CD4-positive, alpha-beta memory T cell (primary cell): ENCODE measurements at regions of chr22 and their contacts with region 1.

Region 1: DNA sequence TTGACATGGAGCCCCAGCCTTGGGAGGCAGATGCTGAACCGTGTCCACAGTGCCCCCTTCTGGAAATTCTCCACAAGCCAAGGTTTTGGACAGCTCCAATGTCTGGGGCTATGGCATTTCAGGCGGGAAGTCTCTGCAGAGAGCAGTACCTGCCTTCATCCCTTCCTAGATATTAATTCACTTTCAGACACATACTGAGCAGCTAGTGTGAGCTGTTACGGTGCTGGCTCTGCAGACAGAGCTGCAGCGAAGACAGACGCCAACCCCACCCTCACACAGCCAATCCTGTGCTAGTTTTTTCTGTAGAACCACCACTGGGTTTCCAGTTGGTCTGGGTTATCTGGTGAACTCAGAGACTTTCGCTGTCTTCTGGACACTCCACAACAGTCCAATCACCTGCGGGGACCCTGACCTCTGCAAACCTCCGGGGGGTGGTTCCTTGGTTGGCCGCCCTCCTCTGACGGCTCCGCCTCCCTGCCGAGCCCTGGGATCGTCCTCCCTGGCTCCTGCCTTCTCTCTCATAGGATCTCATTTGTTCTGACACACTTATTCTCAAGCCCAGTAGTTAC is 9.1 kb downstream of the LMF2 start:
- DNase-seq: peak; percentile 66 to 69 (median 68)
- H3K4me3 ChIP-seq: no peak overlapping the region
- H3K4me3 Mint-ChIP-seq: no peak overlapping the region
- H3K27ac ChIP-seq: no peak overlapping the region
- H3K27ac Mint-ChIP-seq: peak overlapping the region in 1 of 7 donors; percentile 30
- H3K4me1 ChIP-seq: peaks cover 3% of the 10 kb centered on the region
- H3K4me1 Mint-ChIP-seq: peaks cover 0 to 5% (median under 1%) of the 10 kb centered on the region in 4 donors
- H3K27me3 ChIP-seq: no peaks in the 10 kb centered on the region
- H3K27me3 Mint-ChIP-seq: no peaks in the 10 kb centered on the region

Region 2: GRCh38 chr22:50148991-50149721 is 349.2 kb before region 1 on chr22:
- CTCF ChIA-PET with region 1: no interaction called
- POLR2A ChIA-PET with region 1: no interaction called
- intact Hi-C with region 1: loop called (anchors 1 kb)
- DNase-seq: peak; percentile 69 to 76 (median 75)
- H3K4me3 ChIP-seq: no peak overlapping the region
- H3K4me3 Mint-ChIP-seq: no peak overlapping the region
- H3K27ac ChIP-seq: no peak overlapping the region
- H3K27ac Mint-ChIP-seq: peak overlapping the region in 1 of 7 donors; percentile 7
- H3K4me1 ChIP-seq: no peaks in the 10 kb centered on the region
- H3K4me1 Mint-ChIP-seq: peaks cover 0 to 4% (median under 1%) of the 10 kb centered on the region in 4 donors
- H3K27me3 ChIP-seq: no peaks in the 10 kb centered on the region
- H3K27me3 Mint-ChIP-seq: peaks cover 2 to 3% of the 10 kb centered on the region in 2 donors

Region 3: DNA sequence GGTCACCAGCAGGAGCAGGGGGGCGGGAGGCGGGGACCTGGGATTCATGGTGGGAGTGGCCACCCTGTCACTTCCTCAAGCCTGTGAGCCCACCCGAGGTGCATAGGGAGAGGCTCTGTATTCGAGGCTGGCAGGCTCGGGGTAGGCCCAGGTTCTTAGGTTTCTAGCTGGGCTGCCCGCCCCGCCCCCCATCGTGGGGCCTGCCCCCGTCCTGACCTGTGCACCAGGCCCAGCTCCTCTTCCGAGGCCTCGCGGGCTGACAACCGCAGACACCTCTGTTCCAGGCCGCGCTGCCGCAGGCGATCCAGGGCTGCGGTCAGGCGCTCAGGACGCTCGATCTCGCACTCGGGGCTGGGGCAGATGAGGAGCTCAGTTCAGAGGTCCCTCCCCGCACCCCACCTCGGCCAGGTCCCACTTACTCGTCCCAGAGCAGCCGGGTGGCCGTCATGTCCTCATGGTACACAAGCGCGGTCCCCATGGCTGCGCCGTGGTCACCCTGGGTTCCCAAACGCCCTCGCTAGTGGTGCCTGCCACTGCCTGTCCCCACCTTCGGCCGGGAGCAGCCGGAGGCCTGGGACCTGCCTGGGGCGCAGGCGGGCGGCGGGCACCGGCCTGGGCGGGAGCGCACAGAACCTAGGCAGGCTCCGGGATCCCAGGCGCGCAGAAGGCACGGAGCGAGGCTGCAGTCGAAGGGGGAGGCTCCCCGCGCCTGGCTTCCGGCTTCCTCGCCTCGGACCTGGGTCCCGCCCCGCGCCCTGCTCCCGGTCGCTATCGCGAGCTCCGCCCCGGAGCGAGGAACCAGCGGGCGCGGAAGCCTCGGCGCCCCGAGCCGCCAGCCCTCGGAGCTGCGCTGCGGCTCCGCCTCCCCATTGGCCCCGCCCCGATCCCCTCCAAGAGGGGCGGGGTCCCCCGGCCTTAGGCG is 247.6 kb before region 1 on chr22 and contains the start of gene HDAC10:
- CTCF ChIA-PET with region 1: interaction called, 25 read pairs
- POLR2A ChIA-PET with region 1: interaction called, 7 read pairs
- intact Hi-C with region 1: loop called (anchors 1 kb)
- DNase-seq: peak; percentile 71 to 78 (median 74)
- H3K4me3 ChIP-seq: peak within 1 kb of the TSS; percentile 36 to 89
- H3K4me3 Mint-ChIP-seq: peak within 1 kb of the TSS; percentile 73 to 84 (median 78)
- H3K27ac ChIP-seq: peak within 1 kb of the TSS; percentile 66
- H3K27ac Mint-ChIP-seq: peak within 1 kb of the TSS in 6 of 7 donors; percentile 50 to 88 (median 64)
- H3K4me1 ChIP-seq: peaks cover 44% of the 10 kb centered on the region
- H3K4me1 Mint-ChIP-seq: peaks cover 7 to 29% (median 17%) of the 10 kb centered on the region in 4 donors
- H3K27me3 ChIP-seq: no peaks in the 10 kb centered on the region
- H3K27me3 Mint-ChIP-seq: peaks cover 1 to 2% of the 10 kb centered on the region in 2 donors
- total RNA-seq, gene HDAC10: 141 to 151 TPM

Region 4: DNA sequence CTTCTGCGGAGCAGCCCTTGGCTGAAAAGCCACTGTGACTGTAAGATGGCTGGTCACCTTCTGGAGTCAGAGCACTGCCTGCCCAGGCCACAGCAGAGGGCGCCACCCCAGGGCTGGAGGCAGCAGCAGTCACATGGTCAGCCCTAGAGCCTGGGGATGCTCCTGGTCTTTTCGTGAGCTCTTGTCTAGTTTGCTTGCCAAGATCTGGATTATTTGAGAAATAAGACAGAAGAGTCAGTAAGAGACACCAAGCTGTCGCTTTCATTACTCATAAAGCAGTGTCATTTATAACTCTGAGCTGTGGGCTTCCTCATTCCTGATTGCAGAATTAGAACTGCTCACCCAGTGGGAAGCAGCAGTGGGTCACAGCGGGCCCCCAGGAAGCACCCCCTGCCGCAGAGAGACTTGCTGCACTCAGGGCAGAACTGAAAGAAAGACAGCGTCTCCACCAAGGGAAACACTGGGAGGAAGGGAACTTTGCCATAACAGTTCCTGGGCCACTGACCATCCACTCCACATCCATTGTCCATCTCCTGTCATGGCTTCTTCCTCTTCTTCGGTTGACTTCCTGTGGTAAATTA is 98.6 kb before region 1 on chr22:
- CTCF ChIA-PET with region 1: interaction called, 17 read pairs
- POLR2A ChIA-PET with region 1: no interaction called
- intact Hi-C with region 1: loop called (anchors 1 kb)
- DNase-seq: peak in 2 of 5 donors; percentile 12 to 15
- H3K4me3 ChIP-seq: no peak overlapping the region
- H3K4me3 Mint-ChIP-seq: no peak overlapping the region
- H3K27ac ChIP-seq: no peak overlapping the region
- H3K27ac Mint-ChIP-seq: peak overlapping the region in 6 of 7 donors; percentile 57 to 84 (median 76)
- H3K4me1 ChIP-seq: peaks cover 7% of the 10 kb centered on the region
- H3K4me1 Mint-ChIP-seq: peaks cover 13 to 28% (median 18%) of the 10 kb centered on the region in 4 donors
- H3K27me3 ChIP-seq: no peaks in the 10 kb centered on the region
- H3K27me3 Mint-ChIP-seq: no peaks in the 10 kb centered on the region

Region 5: GRCh38 chr22:50444663-50445062 is 53.7 kb before region 1 on chr22:
- CTCF ChIA-PET with region 1: interaction called, 6 read pairs
- POLR2A ChIA-PET with region 1: interaction called, 7 read pairs
- intact Hi-C with region 1: loop called (anchors 10 kb)
- DNase-seq: no peak
- H3K4me3 ChIP-seq: no peak overlapping the region
- H3K4me3 Mint-ChIP-seq: no peak overlapping the region
- H3K27ac ChIP-seq: no peak overlapping the region
- H3K27ac Mint-ChIP-seq: peak overlapping the region in 5 of 7 donors; percentile 46 to 85 (median 69)
- H3K4me1 ChIP-seq: peaks cover 16% of the 10 kb centered on the region
- H3K4me1 Mint-ChIP-seq: peaks cover 7 to 18% (median 9%) of the 10 kb centered on the region in 4 donors
- H3K27me3 ChIP-seq: no peaks in the 10 kb centered on the region
- H3K27me3 Mint-ChIP-seq: no peaks in the 10 kb centered on the region

Region 6: DNA sequence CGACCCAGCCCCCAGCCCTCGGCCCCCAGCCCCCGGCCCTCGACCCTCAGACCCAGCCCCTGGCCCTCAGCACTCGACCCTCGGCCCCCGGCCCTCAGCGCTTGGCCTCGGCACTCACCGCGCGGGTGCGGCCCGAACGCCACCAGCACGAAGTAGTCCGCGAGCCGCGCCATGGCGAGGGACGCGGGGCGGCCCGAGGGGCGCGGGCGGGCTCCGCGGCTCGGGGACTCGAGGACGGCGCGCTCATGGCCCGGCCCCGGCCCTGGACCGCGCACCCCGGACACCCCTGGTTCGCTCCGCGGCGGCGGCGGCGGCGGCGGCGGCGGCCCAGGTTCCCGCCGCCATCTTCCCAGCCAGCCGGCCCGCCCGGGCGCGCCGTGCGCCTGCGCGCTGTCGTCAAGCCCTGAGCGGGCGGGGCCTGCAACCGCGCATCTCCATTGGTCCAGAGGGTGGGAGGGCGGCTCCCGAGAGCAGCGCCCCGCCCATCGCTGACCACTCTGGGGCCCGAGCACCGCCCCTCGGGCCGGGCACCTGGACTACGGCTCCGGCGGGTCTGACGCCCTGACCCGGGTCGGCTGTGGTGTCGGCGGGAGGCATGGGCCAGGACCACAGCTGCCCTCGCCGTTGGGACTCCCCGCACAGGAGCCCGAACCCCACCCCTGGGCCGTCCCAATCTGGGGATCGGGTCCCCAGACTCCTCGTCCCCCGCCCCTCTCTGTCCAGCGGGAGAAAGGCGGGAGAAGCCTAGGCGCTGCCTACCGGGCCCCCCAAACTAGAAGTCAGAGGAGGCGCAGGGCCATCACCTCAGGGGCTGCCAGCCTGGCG is 23.5 kb before region 1 on chr22 and contains the start of gene SBF1:
- CTCF ChIA-PET with region 1: interaction called, 16 read pairs
- POLR2A ChIA-PET with region 1: interaction called, 16 read pairs
- intact Hi-C with region 1: loop called (anchors 1 kb)
- DNase-seq: peak; percentile 83 to 88 (median 84)
- H3K4me3 ChIP-seq: peak within 1 kb of the TSS; percentile 73 to 79
- H3K4me3 Mint-ChIP-seq: peak within 1 kb of the TSS; percentile 88 to 99 (median 95)
- H3K27ac ChIP-seq: peak within 1 kb of the TSS; percentile 75
- H3K27ac Mint-ChIP-seq: peak within 1 kb of the TSS; percentile 89 to 98 (median 94)
- H3K4me1 ChIP-seq: peaks cover 47% of the 10 kb centered on the region
- H3K4me1 Mint-ChIP-seq: peaks cover 28 to 62% (median 40%) of the 10 kb centered on the region in 4 donors
- H3K27me3 ChIP-seq: no peaks in the 10 kb centered on the region
- H3K27me3 Mint-ChIP-seq: no peaks in the 10 kb centered on the region
- total RNA-seq, gene SBF1: 217 to 221 TPM